Sciatic nerve (tissue), 2 donors: ENCODE measurements at regions of chr2 and their contacts with region 1.

Region 1: GRCh38 chr2:79327460-79327859 is 167.9 kb upstream of the REG3A start:
- DNase-seq: no peak
- ATAC-seq: no peak

Region 2: GRCh38 chr2:79723830-79724229 is 396.4 kb after region 1 on chr2:
- intact Hi-C with region 1: no loop called
- DNase-seq: no peak
- ATAC-seq: no peak

Region 3: DNA sequence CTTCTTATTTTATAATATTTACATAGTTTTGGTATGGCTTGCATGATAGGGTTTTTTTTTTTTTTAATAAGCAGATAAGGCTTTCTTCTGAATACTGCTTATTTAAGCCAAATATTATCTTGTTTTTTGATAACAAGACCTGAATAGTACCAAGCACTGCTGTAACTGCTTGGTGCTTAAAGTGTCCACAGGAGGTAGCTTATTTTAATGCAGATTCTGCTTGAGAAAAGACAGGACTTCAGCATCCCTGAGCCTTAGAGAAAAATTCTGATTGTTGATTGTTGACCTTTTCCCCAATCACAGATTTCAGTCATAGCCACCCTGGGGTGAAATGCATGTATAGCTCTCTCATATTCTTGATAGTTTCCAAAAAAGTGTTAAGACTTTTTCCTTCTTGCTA is 521.8 kb after region 1 on chr2:
- intact Hi-C with region 1: loop called (anchors 5 kb)
- DNase-seq: no peak
- ATAC-seq: no peak